CD8-positive, alpha-beta memory T cell (primary cell): ENCODE measurements at regions of chr12 and their contacts with region 1.

Region 1: DNA sequence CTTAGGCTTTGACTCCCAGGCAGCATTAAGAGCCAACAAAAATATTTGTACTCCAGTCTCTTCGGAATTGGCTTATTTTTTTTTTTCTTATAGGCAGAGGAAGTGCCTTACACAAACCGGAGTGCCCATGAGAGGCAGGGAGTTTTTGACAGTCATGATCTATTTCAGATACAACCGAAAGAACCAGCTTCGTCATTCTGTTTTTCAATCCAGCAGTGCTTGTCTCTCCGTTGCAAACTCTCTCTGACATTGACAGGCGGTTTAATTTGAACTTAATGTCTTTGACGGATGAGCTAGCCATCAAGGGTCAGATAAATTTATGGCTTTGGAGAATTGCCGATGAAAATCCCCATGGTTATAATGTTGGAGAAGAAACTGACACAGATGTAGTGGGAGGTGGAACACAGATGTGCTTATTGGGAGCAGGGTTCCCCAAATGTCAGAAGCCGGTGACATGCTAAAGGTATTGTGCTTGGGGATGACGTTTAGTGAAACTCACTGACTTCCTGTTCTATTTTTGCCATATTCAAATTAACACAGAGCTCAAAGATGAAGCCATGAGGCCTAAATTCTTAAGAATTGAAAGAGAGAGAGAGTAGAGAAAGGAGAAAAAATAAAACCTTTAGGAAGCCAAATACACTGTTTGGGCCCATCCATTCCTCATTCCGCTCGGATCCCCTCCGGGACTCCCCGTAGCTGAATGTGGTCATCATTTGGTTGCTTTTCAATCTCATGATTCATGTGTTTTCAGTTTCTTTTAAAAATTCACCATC is 59.7 kb downstream of the PLXNC1 start:
- DNase-seq: peak in 2 of 5 donors; percentile 30 to 45
- H3K4me3 ChIP-seq: peak overlapping the region; percentile 52
- H3K4me3 Mint-ChIP-seq: peak overlapping the region; percentile 76 to 88 (median 82)
- H3K27ac ChIP-seq: peak overlapping the region; percentile 59
- H3K27ac Mint-ChIP-seq: peak overlapping the region; percentile 91 to 99 (median 97)
- H3K4me1 ChIP-seq: peaks cover 51% of the 10 kb centered on the region
- H3K4me1 Mint-ChIP-seq: peaks cover 53 to 65% (median 64%) of the 10 kb centered on the region in 3 donors
- H3K27me3 ChIP-seq: no peaks in the 10 kb centered on the region
- H3K27me3 Mint-ChIP-seq: no peaks in the 10 kb centered on the region

Region 2: DNA sequence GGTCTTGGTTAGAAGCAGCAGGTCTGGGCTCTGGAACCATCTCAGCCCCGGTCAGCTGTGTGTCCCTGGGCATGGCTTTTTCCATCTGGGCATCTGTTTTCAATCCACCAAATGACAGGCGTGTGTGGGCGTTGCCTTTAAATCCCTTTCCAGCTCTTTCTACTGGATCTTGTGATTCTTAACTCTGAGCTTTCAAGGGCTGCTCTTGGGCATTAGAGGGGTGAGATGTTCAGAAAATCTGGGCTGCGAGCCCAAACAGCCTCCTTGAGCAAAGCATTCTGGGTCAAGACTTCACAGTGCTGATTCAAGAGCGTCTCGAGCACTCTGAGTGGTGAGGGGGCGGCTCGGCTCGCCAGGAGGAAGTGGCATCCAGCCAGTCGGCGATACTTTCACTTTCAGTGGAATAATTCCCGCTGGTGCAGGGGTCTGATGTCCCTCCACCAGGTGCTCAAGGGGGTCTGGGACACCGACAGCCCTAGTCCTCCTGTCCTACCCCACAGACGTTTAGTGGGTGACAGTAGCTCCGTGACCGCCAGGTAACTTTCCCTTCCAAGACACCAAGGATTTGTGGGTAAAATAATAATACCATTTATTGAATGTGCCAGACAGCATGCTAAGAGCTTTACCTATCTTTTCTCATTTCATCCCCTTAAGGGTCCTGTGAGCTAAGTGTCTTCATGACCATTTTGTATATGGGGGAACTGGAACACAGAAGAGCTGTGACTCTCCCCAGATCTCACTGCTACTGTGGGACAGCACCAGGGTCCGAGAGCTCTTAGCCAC is 54.4 kb after region 1 on chr12:
- CTCF ChIA-PET with region 1: interaction called, 4 read pairs
- POLR2A ChIA-PET with region 1: interaction called, 10 read pairs
- DNase-seq: peak; percentile 55 to 87 (median 75)
- H3K4me3 ChIP-seq: peak overlapping the region; percentile 70
- H3K4me3 Mint-ChIP-seq: peak overlapping the region; percentile 96 to 99 (median 97)
- H3K27ac ChIP-seq: peak overlapping the region; percentile 75
- H3K27ac Mint-ChIP-seq: peak overlapping the region; percentile 98 to 100 (median 99)
- H3K4me1 ChIP-seq: peaks cover 24% of the 10 kb centered on the region
- H3K4me1 Mint-ChIP-seq: peaks cover 32 to 47% (median 44%) of the 10 kb centered on the region in 3 donors
- H3K27me3 ChIP-seq: no peaks in the 10 kb centered on the region
- H3K27me3 Mint-ChIP-seq: peaks cover 0 to 7% of the 10 kb centered on the region in 2 donors

Region 3: DNA sequence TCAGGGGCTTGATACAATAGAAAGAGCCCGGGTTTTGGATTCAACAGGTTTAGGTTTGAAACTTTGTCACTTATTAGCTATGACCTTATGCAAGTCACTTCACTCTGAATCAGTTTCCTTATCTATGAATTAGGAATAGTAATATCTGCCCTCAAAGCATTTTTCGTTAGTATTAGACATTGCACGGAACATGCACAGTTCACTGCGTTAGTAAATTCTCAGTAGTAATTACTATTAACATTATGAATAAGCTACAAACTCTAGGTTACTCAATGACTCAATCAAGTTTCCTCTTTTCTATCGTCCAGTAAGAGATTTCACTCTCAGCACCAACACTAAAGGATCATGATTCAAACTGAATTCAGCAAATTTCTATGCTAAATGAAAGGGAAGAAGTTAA is 101.3 kb after region 1 on chr12:
- CTCF ChIA-PET with region 1: no interaction called
- POLR2A ChIA-PET with region 1: no interaction called
- DNase-seq: no peak
- H3K4me3 ChIP-seq: no peak overlapping the region
- H3K4me3 Mint-ChIP-seq: no peak overlapping the region
- H3K27ac ChIP-seq: no peak overlapping the region
- H3K27ac Mint-ChIP-seq: no peak overlapping the region
- H3K4me1 ChIP-seq: no peaks in the 10 kb centered on the region
- H3K4me1 Mint-ChIP-seq: peaks cover 3 to 16% (median 14%) of the 10 kb centered on the region in 3 donors
- H3K27me3 ChIP-seq: no peaks in the 10 kb centered on the region
- H3K27me3 Mint-ChIP-seq: no peaks in the 10 kb centered on the region

Region 4: GRCh38 chr12:94516985-94517384 is 308.9 kb after region 1 on chr12:
- CTCF ChIA-PET with region 1: no interaction called
- POLR2A ChIA-PET with region 1: no interaction called
- DNase-seq: no peak
- H3K4me3 ChIP-seq: no peak overlapping the region
- H3K4me3 Mint-ChIP-seq: no peak overlapping the region
- H3K27ac ChIP-seq: no peak overlapping the region
- H3K27ac Mint-ChIP-seq: no peak overlapping the region
- H3K4me1 ChIP-seq: no peaks in the 10 kb centered on the region
- H3K4me1 Mint-ChIP-seq: no peaks in the 10 kb centered on the region
- H3K27me3 ChIP-seq: no peaks in the 10 kb centered on the region
- H3K27me3 Mint-ChIP-seq: peaks cover 0 to 9% of the 10 kb centered on the region in 2 donors